H1 (cell line): ENCODE measurements at regions of chr7 and their contacts with region 1.

Region 1: GRCh38 chr7:24346129-24346528 is 62.1 kb downstream of the NPY start:
- DNase-seq: no peak
- H3K4me3 ChIP-seq: no peak overlapping the region
- H3K27ac ChIP-seq: no peak overlapping the region
- H3K4me1 ChIP-seq: peaks cover 0 to 11% (median 3%) of the 10 kb centered on the region in 4 experiments; a peak in 3 of 7 replicates
- H3K27me3 ChIP-seq: no peaks in the 10 kb centered on the region
- CTCF ChIP-seq: no peak
- EP300 ChIP-seq: no peak
- POLR2A ChIP-seq: no peak
- RAD21 ChIP-seq: no peak

Region 2: DNA sequence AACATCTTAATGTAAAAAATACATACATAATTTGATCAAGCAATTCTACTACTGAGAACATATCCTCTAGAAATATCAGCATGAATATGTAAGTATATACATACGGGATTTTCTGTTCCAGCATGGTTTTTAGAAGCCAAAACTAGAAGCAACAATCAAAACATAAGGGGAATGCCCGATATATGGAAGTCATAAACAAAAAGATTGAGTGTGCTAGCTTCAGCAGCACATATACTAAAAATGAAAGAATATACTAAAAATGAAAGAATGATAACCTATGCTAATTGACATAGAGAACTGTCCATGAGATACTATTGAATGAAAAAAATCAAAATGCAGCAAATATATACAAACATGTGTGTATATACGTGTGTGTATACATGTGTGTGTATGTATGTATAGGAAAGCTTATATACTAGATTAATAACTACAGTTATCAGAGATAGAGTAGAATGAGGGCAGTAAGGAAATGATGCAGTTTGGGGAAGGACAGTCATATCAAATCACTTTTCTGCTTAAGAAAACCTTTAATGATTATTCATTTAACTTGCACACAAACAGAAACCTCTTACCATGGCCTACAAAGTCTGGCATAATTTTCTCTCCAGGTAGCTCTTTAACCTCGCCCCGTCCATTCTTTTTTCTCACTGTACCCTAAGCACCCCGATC is 10.7 kb after region 1 on chr7:
- CTCF ChIA-PET with region 1: interaction called, 11 read pairs
- POLR2A ChIA-PET with region 1: interaction called, 7 read pairs
- DNase-seq: no peak
- H3K4me3 ChIP-seq: no peak overlapping the region
- H3K27ac ChIP-seq: no peak overlapping the region
- H3K4me1 ChIP-seq: no peaks in the 10 kb centered on the region
- H3K27me3 ChIP-seq: no peaks in the 10 kb centered on the region
- CTCF ChIP-seq: no peak
- EP300 ChIP-seq: no peak
- POLR2A ChIP-seq: no peak
- RAD21 ChIP-seq: no peak